Ascending aorta (tissue), 2 donors: ENCODE measurements at regions of chr4 and their contacts with region 1.

Region 1: GRCh38 chr4:87624698-87625097 is 16.4 kb downstream of the DSPP start:
- DNase-seq: no peak
- H3K4me3 ChIP-seq: no peak overlapping the region
- H3K27ac ChIP-seq: no peak overlapping the region
- H3K4me1 ChIP-seq: peaks cover 9 to 17% of the 10 kb centered on the region in 2 donors
- H3K27me3 ChIP-seq: no peaks in the 10 kb centered on the region
- CTCF ChIP-seq: no peak

Region 2: GRCh38 chr4:87375719-87376291 is 248.9 kb before region 1 on chr4:
- intact Hi-C with region 1: no loop called
- DNase-seq: no peak
- H3K4me3 ChIP-seq: no peak overlapping the region
- H3K27ac ChIP-seq: peak overlapping the region in 1 of 2 donors; percentile 2
- H3K4me1 ChIP-seq: peaks cover 0 to 4% of the 10 kb centered on the region in 2 donors
- H3K27me3 ChIP-seq: no peaks in the 10 kb centered on the region
- CTCF ChIP-seq: peak; percentile 60 to 72 (median 70)

Region 3: GRCh38 chr4:87506974-87507701 is 117.6 kb before region 1 on chr4:
- intact Hi-C with region 1: loop called (anchors 5 kb)
- DNase-seq: no peak
- H3K4me3 ChIP-seq: no peak overlapping the region
- H3K27ac ChIP-seq: peak overlapping the region; percentile 88 to 93
- H3K4me1 ChIP-seq: peaks cover 13 to 36% of the 10 kb centered on the region in 2 donors
- H3K27me3 ChIP-seq: no peaks in the 10 kb centered on the region
- CTCF ChIP-seq: no peak

Region 4: GRCh38 chr4:87543835-87544461 is 80.8 kb before region 1 on chr4:
- intact Hi-C with region 1: loop called (anchors 5 kb)
- DNase-seq: no peak
- H3K4me3 ChIP-seq: no peak overlapping the region
- H3K27ac ChIP-seq: peak overlapping the region; percentile 52 to 79
- H3K4me1 ChIP-seq: peaks cover 3 to 36% of the 10 kb centered on the region in 2 donors
- H3K27me3 ChIP-seq: no peaks in the 10 kb centered on the region
- CTCF ChIP-seq: peak; percentile 59 to 67 (median 63)

Region 5: DNA sequence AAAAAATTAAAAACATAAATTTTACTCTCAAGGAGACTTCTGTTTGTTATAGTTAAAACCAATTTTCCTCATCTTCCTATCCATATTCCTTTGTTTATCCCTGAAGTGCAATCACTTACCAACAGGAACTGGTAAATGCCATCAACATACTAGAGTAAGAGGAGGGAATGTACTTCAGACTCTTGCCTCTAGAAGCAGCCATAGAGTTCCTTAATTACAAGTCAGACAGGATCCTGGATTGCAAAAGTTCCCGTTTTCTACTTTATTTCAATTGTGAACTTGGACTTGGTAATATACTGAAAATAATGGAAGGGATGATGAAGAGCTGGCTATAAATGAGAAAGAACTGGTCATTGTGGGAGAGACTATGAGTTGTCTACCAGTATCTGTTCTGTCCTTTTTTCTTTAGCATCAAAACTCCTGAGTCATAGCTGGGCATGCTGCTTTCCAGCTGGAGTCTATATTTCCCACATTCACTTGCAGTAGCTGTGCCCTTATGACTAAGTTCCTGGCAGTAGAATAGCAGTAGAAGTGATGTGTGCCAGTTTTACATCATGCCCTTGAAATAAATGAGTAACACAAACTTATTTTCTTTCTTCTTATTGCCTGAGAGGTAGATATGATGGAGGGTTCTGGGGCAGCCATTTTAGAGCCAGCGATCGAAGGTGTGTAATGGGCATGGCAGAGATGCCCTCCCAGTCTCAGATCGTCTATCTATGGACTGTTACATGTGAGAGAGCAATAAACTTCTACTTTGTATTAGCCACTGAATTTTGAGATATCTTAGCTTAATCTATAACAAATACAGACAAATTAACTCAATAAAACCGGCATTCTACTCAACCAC is 68.7 kb before region 1 on chr4:
- intact Hi-C with region 1: loop called (anchors 2 kb)
- DNase-seq: peak; percentile 27 to 85
- H3K4me3 ChIP-seq: no peak overlapping the region
- H3K27ac ChIP-seq: peak overlapping the region; percentile 82 to 91
- H3K4me1 ChIP-seq: peaks cover 7% of the 10 kb centered on the region in 2 donors
- H3K27me3 ChIP-seq: no peaks in the 10 kb centered on the region
- CTCF ChIP-seq: no peak

Region 6: GRCh38 chr4:87589522-87589921 is 35.2 kb before region 1 on chr4:
- intact Hi-C with region 1: loop called (anchors 5 kb)
- DNase-seq: no peak
- H3K4me3 ChIP-seq: no peak overlapping the region
- H3K27ac ChIP-seq: peak overlapping the region in 1 of 2 donors; percentile 13
- H3K4me1 ChIP-seq: peaks cover 5 to 17% of the 10 kb centered on the region in 2 donors
- H3K27me3 ChIP-seq: no peaks in the 10 kb centered on the region
- CTCF ChIP-seq: no peak

Region 7: DNA sequence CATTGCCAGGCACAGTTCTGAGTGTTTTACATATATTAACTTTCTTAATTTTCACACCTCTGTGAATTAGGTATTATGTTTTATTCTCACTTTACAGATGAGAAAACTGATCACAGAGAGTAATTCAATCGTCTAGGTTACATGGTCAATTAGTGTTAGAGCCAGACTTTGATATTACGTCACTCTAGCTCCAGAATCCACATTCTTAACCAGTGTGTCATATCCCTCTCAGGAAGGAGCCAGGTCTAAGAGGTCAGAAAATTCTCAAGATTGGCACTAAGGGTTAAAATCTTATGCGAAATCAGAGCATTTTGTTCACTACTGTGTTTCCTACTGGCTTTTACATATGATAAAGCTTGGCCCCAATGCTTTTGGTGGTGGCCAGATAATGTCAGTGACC is 32.8 kb after region 1 on chr4:
- intact Hi-C with region 1: loop called (anchors 2 kb)
- DNase-seq: no peak
- H3K4me3 ChIP-seq: no peak overlapping the region
- H3K27ac ChIP-seq: no peak overlapping the region
- H3K4me1 ChIP-seq: peaks cover 2 to 22% of the 10 kb centered on the region in 2 donors
- H3K27me3 ChIP-seq: no peaks in the 10 kb centered on the region
- CTCF ChIP-seq: no peak

Region 8: DNA sequence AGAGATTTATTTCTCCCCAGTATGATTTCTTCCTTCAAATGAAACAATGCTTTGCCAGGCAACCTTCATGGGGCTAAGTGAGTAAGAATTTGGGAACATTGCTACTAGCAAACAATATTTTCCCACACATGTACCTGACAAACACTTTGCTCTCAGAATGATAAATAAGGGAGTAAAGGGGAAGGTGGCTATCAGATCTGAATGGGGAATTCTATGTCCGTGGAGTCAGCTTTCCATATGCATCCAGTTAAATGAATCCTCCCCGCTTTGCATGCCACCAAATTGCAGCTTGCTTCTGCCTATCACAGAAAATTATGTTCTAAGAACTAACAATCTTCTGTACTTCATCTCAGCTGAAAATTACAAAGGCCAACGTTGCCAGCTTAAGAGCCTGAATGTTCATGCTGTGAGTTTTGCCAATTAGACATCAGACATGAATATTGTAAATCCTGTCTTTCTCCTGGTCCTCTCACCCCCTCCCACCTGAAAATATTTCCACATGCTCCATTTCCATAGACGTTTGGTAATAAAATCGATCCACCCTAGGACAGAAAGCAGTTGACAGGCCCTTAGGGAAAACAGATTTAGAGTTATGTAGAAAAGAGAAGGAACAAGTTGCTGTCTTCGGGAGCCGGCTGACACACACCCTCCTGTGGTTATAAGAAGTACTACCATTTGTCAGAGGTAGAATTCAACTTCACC is 214.3 kb after region 1 on chr4:
- intact Hi-C with region 1: loop called (anchors 5 kb)
- DNase-seq: no peak
- H3K4me3 ChIP-seq: no peak overlapping the region
- H3K27ac ChIP-seq: no peak overlapping the region
- H3K4me1 ChIP-seq: peaks cover 0 to 4% of the 10 kb centered on the region in 2 donors
- H3K27me3 ChIP-seq: no peaks in the 10 kb centered on the region
- CTCF ChIP-seq: peak; percentile 48 to 86 (median 78)